ENCODE measurements at regions of chr4 and their contacts with region 1.

Region 1: GRCh38 chr4:17597517-17597916 is 16.9 kb upstream of the MED28 start:
- DNase-seq: peak; percentile 28
- H3K4me3 Mint-ChIP-seq: no peak overlapping the region
- H3K27ac Mint-ChIP-seq: no peak overlapping the region
- H3K4me1 Mint-ChIP-seq: no peaks in the 10 kb centered on the region
- H3K27me3 Mint-ChIP-seq: no peaks in the 10 kb centered on the region
- CTCF ChIP-seq: no peak

Region 2: GRCh38 chr4:17654701-17655100 is 57.2 kb after region 1 on chr4:
- CTCF ChIA-PET with region 1: no interaction called
- intact Hi-C with region 1: no loop called
- DNase-seq: no peak
- H3K4me3 Mint-ChIP-seq: no peak overlapping the region
- H3K27ac Mint-ChIP-seq: no peak overlapping the region
- H3K4me1 Mint-ChIP-seq: no peaks in the 10 kb centered on the region
- H3K27me3 Mint-ChIP-seq: no peaks in the 10 kb centered on the region
- CTCF ChIP-seq: no peak

Region 3: DNA sequence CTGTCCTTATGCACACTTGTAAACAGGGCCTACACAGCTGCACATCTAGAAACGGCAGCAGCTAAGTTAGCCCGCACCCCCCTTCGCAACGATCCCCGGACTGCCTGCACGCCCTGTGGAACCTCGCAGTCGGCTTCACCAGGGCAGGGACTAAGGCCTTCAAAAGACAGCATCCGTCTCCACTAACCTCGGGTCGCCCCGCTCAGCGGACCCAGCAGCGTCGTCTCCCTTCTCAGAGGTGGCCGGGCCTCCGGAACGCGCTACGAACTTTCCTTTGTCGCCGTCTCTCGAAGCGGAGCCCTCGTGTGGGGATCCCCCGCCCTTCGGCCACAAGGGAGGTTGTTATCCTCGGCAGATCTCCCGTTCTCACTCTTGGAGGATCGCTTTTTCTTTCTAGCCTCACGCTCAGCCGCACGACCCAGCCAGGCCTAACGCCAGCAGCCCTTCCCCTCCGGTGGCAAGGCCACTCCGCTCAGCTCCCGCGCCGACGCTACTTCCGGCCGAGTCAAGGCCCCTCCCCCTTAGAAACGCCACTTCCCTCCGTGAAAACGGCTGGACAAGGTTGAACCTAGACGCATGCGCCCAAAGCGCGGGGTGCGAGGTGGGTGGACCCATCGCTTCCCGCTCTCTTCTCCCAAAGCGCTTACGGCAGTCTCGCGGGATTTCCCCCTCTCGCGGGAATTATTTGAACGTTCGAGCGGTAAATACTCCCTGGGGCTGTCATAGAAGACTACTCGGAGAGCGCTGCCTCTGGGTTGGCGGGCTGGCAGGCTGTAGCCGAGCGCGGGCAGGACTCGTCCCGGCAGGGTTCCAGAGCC is 213.0 kb after region 1 on chr4 and contains the starts of genes DCAF16 and NCAPG:
- CTCF ChIA-PET with region 1: no interaction called
- intact Hi-C with region 1: loop called (anchors 5 kb)
- DNase-seq: peak; percentile 97
- H3K4me3 Mint-ChIP-seq: peak within 1 kb of the TSS; percentile 91
- H3K27ac Mint-ChIP-seq: peak within 1 kb of the TSS; percentile 89
- H3K4me1 Mint-ChIP-seq: peaks cover 9% of the 10 kb centered on the region
- H3K27me3 Mint-ChIP-seq: no peaks in the 10 kb centered on the region
- CTCF ChIP-seq: no peak
- total RNA-seq, gene DCAF16: 34.8 and 39.0 TPM in 2 replicates
- total RNA-seq, gene NCAPG: 26.9 and 35.3 TPM in 2 replicates